ENCODE measurements at regions of chr2 and their contacts with region 1.

Region 1: GRCh38 chr2:27152786-27153510 is 4.1 kb downstream of the TCF23 start:
- DNase-seq: no peak
- ATAC-seq: no peak
- H3K4me3 ChIP-seq: no peak overlapping the region
- H3K27ac ChIP-seq: no peak overlapping the region
- H3K4me1 ChIP-seq: no peaks in the 10 kb centered on the region
- H3K27me3 ChIP-seq: no peaks in the 10 kb centered on the region
- CTCF ChIP-seq: no peak

Region 2: GRCh38 chr2:27050281-27050995 is 102.5 kb before region 1 on chr2:
- CTCF ChIA-PET with region 1: no interaction called
- POLR2A ChIA-PET with region 1: no interaction called
- in situ Hi-C with region 1: no loop called
- intact Hi-C with region 1: no loop called
- DNase-seq: peak; percentile 99
- ATAC-seq: peak; percentile 88
- H3K4me3 ChIP-seq: peak overlapping the region; percentile 80 to 95
- H3K27ac ChIP-seq: peak overlapping the region; percentile 86
- H3K4me1 ChIP-seq: peaks cover 6% of the 10 kb centered on the region
- H3K27me3 ChIP-seq: no peaks in the 10 kb centered on the region
- CTCF ChIP-seq: no peak

Region 3: DNA sequence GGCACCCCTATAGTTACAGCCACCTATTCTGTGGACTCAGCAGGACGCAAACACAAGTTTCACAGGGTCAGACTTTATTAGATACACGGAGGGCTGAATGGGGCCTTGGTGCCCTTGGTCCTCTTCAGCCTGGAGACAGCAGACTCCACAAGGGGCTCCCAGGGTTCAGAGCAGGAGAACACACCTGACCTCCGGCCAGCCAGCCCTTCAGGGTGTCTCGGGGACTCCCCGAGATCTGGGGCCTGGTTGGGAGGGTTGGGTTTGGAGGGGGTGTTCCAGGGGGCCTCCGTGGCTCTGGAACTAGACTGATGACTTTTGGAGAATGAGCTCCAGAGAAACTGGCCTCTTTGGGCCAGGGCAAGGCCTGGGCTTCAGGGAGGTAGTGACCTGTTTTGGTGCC is 16.2 kb before region 1 on chr2:
- CTCF ChIA-PET with region 1: interaction called, 5 read pairs
- POLR2A ChIA-PET with region 1: interaction called, 11 read pairs
- in situ Hi-C with region 1: no loop called
- intact Hi-C with region 1: no loop called
- DNase-seq: no peak
- ATAC-seq: no peak
- H3K4me3 ChIP-seq: no peak overlapping the region
- H3K27ac ChIP-seq: no peak overlapping the region
- H3K4me1 ChIP-seq: peaks cover 5% of the 10 kb centered on the region
- H3K27me3 ChIP-seq: no peaks in the 10 kb centered on the region
- CTCF ChIP-seq: no peak

Region 4: DNA sequence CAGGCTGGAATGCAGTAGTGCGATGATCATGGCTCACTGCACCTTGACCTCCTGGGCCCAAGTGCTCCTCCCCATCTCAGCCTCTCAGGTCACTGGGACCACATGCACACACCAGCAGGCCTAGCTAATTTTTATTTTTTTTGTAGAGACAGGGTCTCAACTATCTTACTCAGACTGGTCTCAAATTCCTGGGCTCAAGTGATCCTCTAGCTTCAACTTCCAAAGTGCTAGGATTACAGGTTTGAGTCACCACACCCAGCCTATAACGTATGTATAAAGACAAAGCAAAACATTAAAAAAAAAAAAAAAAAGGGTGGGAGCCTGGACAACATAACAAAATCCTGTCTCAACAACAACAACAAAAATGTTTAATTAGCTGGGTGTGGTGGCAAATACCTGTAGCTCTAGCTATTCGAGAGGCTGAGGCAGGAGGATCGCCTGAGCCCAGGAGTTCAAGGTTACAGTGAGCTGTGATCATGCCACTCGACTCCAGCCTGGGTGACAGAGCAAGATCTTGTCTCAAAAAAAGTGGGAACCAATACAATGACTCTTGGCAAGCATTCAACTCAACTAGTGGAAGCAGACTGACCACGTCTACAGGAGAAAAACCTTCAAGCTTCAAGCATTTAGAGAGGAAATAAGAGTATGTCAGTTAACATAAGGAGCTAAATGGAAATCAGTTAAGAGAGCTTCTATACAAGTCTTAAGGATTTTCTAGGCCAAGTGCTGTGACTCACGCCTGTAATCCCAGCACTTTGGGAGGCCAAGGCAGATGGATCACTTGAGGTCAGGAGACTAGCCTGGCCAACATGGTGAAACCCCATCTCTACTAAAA is 201.0 kb after region 1 on chr2:
- CTCF ChIA-PET with region 1: no interaction called
- POLR2A ChIA-PET with region 1: no interaction called
- in situ Hi-C with region 1: no loop called
- intact Hi-C with region 1: no loop called
- DNase-seq: no peak
- ATAC-seq: no peak
- H3K4me3 ChIP-seq: no peak overlapping the region
- H3K27ac ChIP-seq: no peak overlapping the region; the same call in 1 of the 2 replicates
- H3K4me1 ChIP-seq: peaks cover 19% of the 10 kb centered on the region
- H3K27me3 ChIP-seq: no peaks in the 10 kb centered on the region
- CTCF ChIP-seq: no peak

Measured in Panc1 (cell line).